ENCODE measurements at regions of chr19 and their contacts with region 1.

Region 1: DNA sequence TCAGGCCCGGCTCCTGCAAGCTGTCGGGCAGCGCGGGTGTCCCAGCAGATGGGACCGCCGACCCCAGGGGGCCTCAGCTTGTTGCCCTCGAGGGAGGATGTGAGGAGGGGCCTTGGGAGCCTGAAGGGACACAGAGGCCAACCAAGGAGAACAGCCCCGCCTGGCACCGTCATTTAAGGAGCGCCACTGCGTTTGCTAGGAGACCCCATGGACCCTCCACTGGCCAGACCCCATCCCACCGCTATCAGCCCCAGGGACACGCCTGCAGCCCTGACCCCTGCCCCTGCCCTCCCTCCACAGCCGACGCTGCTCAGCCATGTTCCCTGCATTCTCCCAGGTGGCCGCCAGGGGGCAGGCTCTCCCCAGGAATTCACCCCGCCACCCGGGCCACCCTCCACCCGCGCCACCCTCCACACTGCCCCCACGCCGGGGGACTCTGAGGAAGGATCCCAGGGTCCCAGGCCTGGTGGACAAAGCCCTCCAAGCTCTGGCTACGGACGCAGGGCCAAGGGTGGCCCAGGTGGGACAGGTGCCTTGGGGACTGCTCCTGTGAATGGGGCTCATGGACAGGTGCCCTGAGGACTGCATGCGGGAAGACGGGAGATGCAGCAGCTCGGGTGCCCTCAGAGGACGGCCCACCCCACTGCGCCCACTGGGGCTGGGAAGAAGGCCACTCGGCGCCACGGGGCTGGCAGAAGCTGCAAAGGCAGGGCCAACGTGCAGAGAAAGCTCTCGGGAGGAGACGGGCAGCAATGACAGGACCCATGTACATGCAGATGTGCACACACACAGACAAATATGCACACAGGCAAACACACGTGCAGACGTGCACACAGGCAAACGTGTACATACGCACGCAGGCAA is 34.4 kb downstream of the PIP5K1C start:
- DNase-seq: no peak
- H3K4me3 ChIP-seq: no peak overlapping the region
- CTCF ChIP-seq: peak; percentile 86

Region 2: GRCh38 chr19:3565139-3565538 is 100.8 kb before region 1 on chr19:
- CTCF ChIA-PET with region 1: no interaction called
- POLR2A ChIA-PET with region 1: no interaction called
- DNase-seq: no peak
- H3K4me3 ChIP-seq: no peak overlapping the region
- CTCF ChIP-seq: no peak

Region 3: GRCh38 chr19:3655402-3656072 is 10.4 kb before region 1 on chr19:
- CTCF ChIA-PET with region 1: interaction called, 48 read pairs
- POLR2A ChIA-PET with region 1: no interaction called
- DNase-seq: peak; percentile 69
- H3K4me3 ChIP-seq: peak overlapping the region; percentile 30
- CTCF ChIP-seq: no peak

Region 4: GRCh38 chr19:3687774-3688706 is 22.1 kb after region 1 on chr19:
- CTCF ChIA-PET with region 1: interaction called, 13 read pairs
- POLR2A ChIA-PET with region 1: interaction called, 3 read pairs
- DNase-seq: no peak
- H3K4me3 ChIP-seq: no peak overlapping the region
- CTCF ChIP-seq: no peak

Region 5: DNA sequence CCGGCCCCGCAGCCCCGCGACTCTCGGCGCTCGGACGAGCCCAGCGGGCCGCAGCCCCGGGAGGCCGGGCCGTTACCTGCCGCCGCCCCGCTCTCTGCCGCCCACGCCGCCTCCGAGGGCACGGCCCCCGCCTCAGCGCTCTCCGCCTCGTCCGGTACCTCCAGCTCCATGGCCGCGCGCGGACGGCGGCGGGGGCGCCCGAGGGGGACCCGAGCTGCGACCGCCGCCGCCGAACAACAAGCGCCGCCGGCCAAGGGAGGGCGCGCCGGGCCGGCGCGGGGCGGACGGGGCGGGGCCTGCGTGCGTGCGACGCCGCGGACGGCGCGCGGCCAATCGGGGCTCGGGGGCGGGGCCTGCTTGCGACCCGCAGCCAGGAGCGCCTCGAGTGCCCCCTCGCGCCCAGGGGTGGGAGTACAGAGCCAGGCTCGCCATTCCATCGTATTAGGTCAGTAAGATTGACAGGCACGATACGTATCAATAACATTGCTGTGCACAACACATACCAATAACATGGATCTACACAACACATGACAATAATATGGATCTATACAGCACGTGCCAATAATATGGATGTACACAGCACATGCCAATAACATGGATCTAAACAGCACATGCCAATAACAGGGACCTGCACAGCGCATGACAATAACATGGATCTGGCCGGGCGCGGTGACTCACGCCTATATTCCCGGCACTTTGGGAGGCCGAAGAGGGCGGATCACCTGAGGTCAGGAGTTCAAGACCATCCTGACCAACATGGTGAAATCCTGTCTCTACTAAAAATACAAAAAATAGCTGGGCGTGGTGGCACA is 34.5 kb after region 1 on chr19 and contains the start of gene PIP5K1C:
- CTCF ChIA-PET with region 1: interaction called, 38 read pairs
- POLR2A ChIA-PET with region 1: no interaction called
- DNase-seq: no peak
- H3K4me3 ChIP-seq: peak within 1 kb of the TSS; percentile 74
- CTCF ChIP-seq: peak; percentile 86

Region 6: GRCh38 chr19:3710265-3710812 is 44.4 kb after region 1 on chr19:
- CTCF ChIA-PET with region 1: interaction called, 38 read pairs
- POLR2A ChIA-PET with region 1: no interaction called
- DNase-seq: no peak
- H3K4me3 ChIP-seq: no peak overlapping the region
- CTCF ChIP-seq: no peak

Region 7: GRCh38 chr19:3866910-3867638 is 201.2 kb after region 1 on chr19:
- CTCF ChIA-PET with region 1: no interaction called
- POLR2A ChIA-PET with region 1: no interaction called
- DNase-seq: no peak
- H3K4me3 ChIP-seq: no peak overlapping the region
- CTCF ChIP-seq: no peak

Measured in AG04449 (cell line).